ENCODE measurements at regions of chr5 and their contacts with region 1.

Region 1: DNA sequence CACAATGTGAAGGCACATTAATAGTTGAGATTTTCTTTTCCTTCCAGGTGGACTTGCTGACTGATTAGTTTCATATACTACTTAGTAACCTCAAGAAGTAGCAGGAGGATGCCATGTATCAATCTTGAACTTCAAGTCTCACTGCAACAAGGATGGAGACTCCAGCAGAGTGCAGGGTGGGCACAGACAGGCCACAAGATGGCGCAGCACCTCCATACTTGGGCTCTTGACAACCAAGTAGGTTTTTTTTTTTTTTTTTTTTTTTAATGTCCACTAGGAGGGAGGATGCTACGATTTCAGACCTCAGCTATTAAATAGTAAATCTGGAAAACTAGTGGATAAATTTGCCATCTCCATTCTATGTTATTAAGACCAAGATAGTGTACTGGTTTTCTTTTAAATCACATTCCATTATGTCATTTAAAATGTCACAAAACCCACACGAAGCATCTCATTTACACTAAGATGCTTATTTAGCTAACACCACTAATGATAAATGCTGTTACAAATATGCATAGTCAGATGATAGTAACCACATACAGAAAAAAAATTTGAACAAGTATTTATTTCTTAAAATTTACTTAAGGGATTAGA is 58.6 kb downstream of the IL6ST start:
- DNase-seq: peak; percentile 49 to 88 (median 72)
- ATAC-seq: peak; percentile 70 to 74 (median 73)
- H3K4me3 ChIP-seq: no peak overlapping the region
- H3K4me3 Mint-ChIP-seq: no peak overlapping the region
- H3K27ac ChIP-seq: no peak overlapping the region
- H3K27ac Mint-ChIP-seq: peak overlapping the region in 1 of 2 donors; percentile 34
- H3K4me1 ChIP-seq: no peaks in the 10 kb centered on the region
- H3K4me1 Mint-ChIP-seq: peaks cover 0 to 15% (median 15%) of the 10 kb centered on the region in 3 donors
- H3K27me3 ChIP-seq: no peaks in the 10 kb centered on the region
- H3K27me3 Mint-ChIP-seq: no peaks in the 10 kb centered on the region

Region 2: DNA sequence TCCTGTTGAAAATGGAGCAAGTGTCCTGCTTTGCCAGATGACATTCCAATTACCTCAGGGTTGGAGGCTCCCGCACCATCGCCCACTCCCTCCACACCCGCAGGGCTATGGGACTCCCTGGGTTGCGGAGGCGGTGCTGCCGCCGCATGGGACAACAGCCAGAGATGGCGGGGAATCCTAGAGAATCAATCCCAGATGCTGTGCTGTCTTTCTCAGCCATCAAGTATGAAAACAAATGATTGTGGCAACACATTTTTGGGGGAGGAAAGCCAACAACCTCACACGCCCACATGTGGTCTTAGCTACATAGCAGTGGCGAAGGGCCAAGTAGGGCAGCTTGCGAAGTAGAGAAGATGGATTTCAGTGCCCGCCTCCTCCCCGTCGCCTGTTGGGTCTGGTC is 38.3 kb before region 1 on chr5:
- CTCF ChIA-PET with region 1: interaction called, 3 to 6 read pairs
- POLR2A ChIA-PET with region 1: interaction called in 1 of 2 experiments, 11 read pairs
- DNase-seq: peak in 2 of 35 experiments; percentile 3 to 22
- ATAC-seq: no peak
- H3K4me3 ChIP-seq: no peak overlapping the region
- H3K4me3 Mint-ChIP-seq: no peak overlapping the region
- H3K27ac ChIP-seq: no peak overlapping the region
- H3K27ac Mint-ChIP-seq: no peak overlapping the region
- H3K4me1 ChIP-seq: peaks cover 0 to 10% of the 10 kb centered on the region in 2 experiments
- H3K4me1 Mint-ChIP-seq: peaks cover 8 to 17% (median 11%) of the 10 kb centered on the region in 3 donors
- H3K27me3 ChIP-seq: peaks cover 0 to 16% of the 10 kb centered on the region in 2 experiments
- H3K27me3 Mint-ChIP-seq: peaks cover 4 to 10% of the 10 kb centered on the region in 2 donors

Region 3: DNA sequence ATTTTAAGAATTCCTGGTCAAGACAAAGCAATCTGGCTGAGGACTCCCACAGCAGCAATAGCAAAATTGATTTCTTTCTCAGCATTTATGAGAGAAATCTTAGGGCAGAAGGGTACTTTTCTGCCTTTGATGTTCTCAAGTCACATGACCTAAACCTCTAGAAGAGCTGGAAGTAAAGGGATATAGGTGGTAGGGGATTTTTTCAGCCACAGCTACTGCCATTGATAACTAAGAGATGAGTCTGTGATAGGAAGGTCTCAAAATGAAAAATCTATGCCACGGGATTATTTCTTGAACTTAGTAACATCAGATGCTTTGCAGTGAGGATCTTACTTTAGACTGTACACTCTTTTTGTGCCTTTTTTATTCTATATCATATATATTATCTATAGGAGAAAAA is 23.0 kb after region 1 on chr5:
- CTCF ChIA-PET with region 1: interaction called in 1 of 2 experiments, 12 read pairs
- POLR2A ChIA-PET with region 1: interaction called in 1 of 2 experiments, 4 read pairs
- DNase-seq: peak in 1 of 35 experiments; percentile 56
- ATAC-seq: peak in 1 of 4 experiments; percentile 80
- H3K4me3 ChIP-seq: no peak overlapping the region
- H3K4me3 Mint-ChIP-seq: no peak overlapping the region
- H3K27ac ChIP-seq: no peak overlapping the region
- H3K27ac Mint-ChIP-seq: peak overlapping the region; percentile 52 to 64
- H3K4me1 ChIP-seq: no peaks in the 10 kb centered on the region
- H3K4me1 Mint-ChIP-seq: peaks cover 14 to 23% (median 21%) of the 10 kb centered on the region in 3 donors
- H3K27me3 ChIP-seq: no peaks in the 10 kb centered on the region
- H3K27me3 Mint-ChIP-seq: no peaks in the 10 kb centered on the region

Region 4: DNA sequence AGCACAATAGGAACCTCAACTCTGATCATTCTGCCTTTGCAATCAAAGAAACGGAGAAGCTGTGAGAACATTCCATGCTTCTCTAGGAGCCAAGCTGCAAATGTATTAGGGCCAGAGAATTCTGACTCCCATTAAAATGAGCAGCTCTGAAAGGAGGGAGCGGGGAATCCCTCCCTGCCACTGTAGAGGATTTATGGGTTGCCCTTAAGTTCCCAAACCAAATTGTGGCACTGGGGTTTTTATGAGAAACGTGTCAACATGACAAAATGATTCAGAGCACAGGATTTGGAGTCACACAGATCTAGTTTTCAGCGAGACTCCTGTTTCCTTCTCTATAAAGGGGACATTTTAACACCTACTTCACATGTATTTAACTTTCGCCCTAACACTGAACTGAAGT is 56.8 kb after region 1 on chr5:
- CTCF ChIA-PET with region 1: interaction called, 12 to 15 read pairs
- POLR2A ChIA-PET with region 1: interaction called in 1 of 2 experiments, 8 read pairs
- DNase-seq: no peak
- ATAC-seq: no peak
- H3K4me3 ChIP-seq: peak overlapping the region; percentile 88 to 99
- H3K4me3 Mint-ChIP-seq: peak overlapping the region; percentile 93 to 99 (median 95)
- H3K27ac ChIP-seq: peak overlapping the region; percentile 88
- H3K27ac Mint-ChIP-seq: peak overlapping the region; percentile 95 to 100
- H3K4me1 ChIP-seq: peaks cover 24 to 43% of the 10 kb centered on the region in 2 experiments
- H3K4me1 Mint-ChIP-seq: peaks cover 59 to 75% (median 73%) of the 10 kb centered on the region in 3 donors
- H3K27me3 ChIP-seq: no peaks in the 10 kb centered on the region
- H3K27me3 Mint-ChIP-seq: no peaks in the 10 kb centered on the region

Region 5: GRCh38 chr5:56154732-56155484 is 218.7 kb after region 1 on chr5:
- CTCF ChIA-PET with region 1: no interaction called
- POLR2A ChIA-PET with region 1: interaction called in 1 of 2 experiments, 11 read pairs
- DNase-seq: peak in 6 of 35 experiments; percentile 10 to 50 (median 28)
- ATAC-seq: peak; percentile 32 to 77 (median 46)
- H3K4me3 ChIP-seq: no peak overlapping the region
- H3K4me3 Mint-ChIP-seq: peak overlapping the region in 1 of 3 donors; percentile 50
- H3K27ac ChIP-seq: peak overlapping the region; percentile 40
- H3K27ac Mint-ChIP-seq: peak overlapping the region; percentile 89 to 97
- H3K4me1 ChIP-seq: peaks cover 50 to 71% of the 10 kb centered on the region in 2 experiments
- H3K4me1 Mint-ChIP-seq: peaks cover 66 to 77% (median 76%) of the 10 kb centered on the region in 3 donors
- H3K27me3 ChIP-seq: no peaks in the 10 kb centered on the region
- H3K27me3 Mint-ChIP-seq: no peaks in the 10 kb centered on the region

Region 6: GRCh38 chr5:56200856-56201666 is 264.9 kb after region 1 on chr5:
- CTCF ChIA-PET with region 1: interaction called, 22 to 47 read pairs
- POLR2A ChIA-PET with region 1: interaction called, 3 to 8 read pairs
- DNase-seq: peak; percentile 17 to 83 (median 43)
- ATAC-seq: peak; percentile 82 to 99 (median 96)
- H3K4me3 ChIP-seq: no peak overlapping the region
- H3K4me3 Mint-ChIP-seq: no peak overlapping the region
- H3K27ac ChIP-seq: no peak overlapping the region
- H3K27ac Mint-ChIP-seq: peak overlapping the region in 1 of 2 donors; percentile 79
- H3K4me1 ChIP-seq: peaks cover 7% of the 10 kb centered on the region in 2 experiments
- H3K4me1 Mint-ChIP-seq: peaks cover 16 to 31% (median 27%) of the 10 kb centered on the region in 3 donors
- H3K27me3 ChIP-seq: no peaks in the 10 kb centered on the region
- H3K27me3 Mint-ChIP-seq: no peaks in the 10 kb centered on the region

Region 7: GRCh38 chr5:56270568-56271392 is 334.6 kb after region 1 on chr5:
- CTCF ChIA-PET with region 1: interaction called in 1 of 2 experiments, 16 read pairs
- POLR2A ChIA-PET with region 1: interaction called in 1 of 2 experiments, 3 read pairs
- DNase-seq: peak; percentile 38 to 84 (median 62)
- ATAC-seq: peak; percentile 89 to 97 (median 94)
- H3K4me3 ChIP-seq: no peak overlapping the region
- H3K4me3 Mint-ChIP-seq: peak overlapping the region; percentile 54 to 64 (median 61)
- H3K27ac ChIP-seq: no peak overlapping the region
- H3K27ac Mint-ChIP-seq: peak overlapping the region; percentile 73 to 83
- H3K4me1 ChIP-seq: peaks cover 4 to 7% of the 10 kb centered on the region in 2 experiments
- H3K4me1 Mint-ChIP-seq: peaks cover 18 to 21% (median 18%) of the 10 kb centered on the region in 3 donors
- H3K27me3 ChIP-seq: peaks cover 0 to 3% of the 10 kb centered on the region in 2 experiments
- H3K27me3 Mint-ChIP-seq: no peaks in the 10 kb centered on the region